Caco-2 (cell line): ENCODE measurements at regions of chr1 and their contacts with region 1.

Region 1: DNA sequence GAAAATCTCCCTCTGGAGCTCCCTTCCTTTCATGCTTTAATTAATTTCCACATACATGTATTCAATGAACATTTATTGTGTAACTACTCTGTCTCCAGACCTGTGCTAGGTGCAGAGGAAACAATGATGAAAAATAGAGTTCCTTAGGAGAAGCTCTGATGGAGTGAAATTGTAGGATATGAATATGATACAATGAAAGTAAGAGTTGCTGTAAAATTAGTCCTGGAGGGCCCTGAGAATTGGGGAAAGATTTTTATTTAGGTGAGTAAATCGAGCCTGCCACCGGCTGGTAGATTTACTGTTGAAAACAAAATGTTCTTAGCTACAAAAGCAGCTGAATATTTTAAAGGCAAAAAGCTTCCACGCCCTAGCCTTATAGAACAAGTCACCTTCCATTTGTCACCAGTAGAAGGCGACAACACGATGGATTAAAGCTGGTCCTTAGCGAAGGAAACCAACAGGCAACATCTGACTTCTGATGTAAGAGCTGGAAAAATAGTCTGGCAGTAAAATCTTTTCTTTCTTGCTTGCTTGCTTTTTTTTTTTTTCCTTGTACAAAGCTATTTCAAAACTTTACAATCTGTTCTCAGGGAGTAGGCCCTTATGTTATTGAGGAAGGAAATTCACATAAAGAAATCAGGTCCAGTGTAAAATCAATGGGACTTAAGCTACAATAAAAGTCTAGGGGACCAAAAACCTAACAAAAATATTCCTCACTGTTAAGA is 82.0 kb upstream of the ROR1 start:
- DNase-seq: peak; percentile 62 to 73
- H3K4me3 ChIP-seq: no peak overlapping the region
- H3K4me3 Mint-ChIP-seq: no peak overlapping the region
- H3K27ac Mint-ChIP-seq: no peak overlapping the region
- H3K4me1 ChIP-seq: peaks cover 5% of the 10 kb centered on the region; the same call in 1 of the 2 replicates
- H3K4me1 Mint-ChIP-seq: peaks cover 18% of the 10 kb centered on the region
- H3K27me3 ChIP-seq: no peaks in the 10 kb centered on the region
- H3K27me3 Mint-ChIP-seq: no peaks in the 10 kb centered on the region
- CTCF ChIP-seq: peak; percentile 54 to 66

Region 2: GRCh38 chr1:63454269-63454668 is 237.6 kb before region 1 on chr1:
- CTCF ChIA-PET with region 1: no interaction called
- POLR2A ChIA-PET with region 1: no interaction called
- intact Hi-C with region 1: no loop called
- DNase-seq: no peak
- H3K4me3 ChIP-seq: no peak overlapping the region
- H3K4me3 Mint-ChIP-seq: no peak overlapping the region
- H3K27ac Mint-ChIP-seq: no peak overlapping the region
- H3K4me1 ChIP-seq: no peaks in the 10 kb centered on the region
- H3K4me1 Mint-ChIP-seq: no peaks in the 10 kb centered on the region
- H3K27me3 ChIP-seq: no peaks in the 10 kb centered on the region
- H3K27me3 Mint-ChIP-seq: no peaks in the 10 kb centered on the region
- CTCF ChIP-seq: peak in 1 of 2 experiments; percentile 6

Region 3: DNA sequence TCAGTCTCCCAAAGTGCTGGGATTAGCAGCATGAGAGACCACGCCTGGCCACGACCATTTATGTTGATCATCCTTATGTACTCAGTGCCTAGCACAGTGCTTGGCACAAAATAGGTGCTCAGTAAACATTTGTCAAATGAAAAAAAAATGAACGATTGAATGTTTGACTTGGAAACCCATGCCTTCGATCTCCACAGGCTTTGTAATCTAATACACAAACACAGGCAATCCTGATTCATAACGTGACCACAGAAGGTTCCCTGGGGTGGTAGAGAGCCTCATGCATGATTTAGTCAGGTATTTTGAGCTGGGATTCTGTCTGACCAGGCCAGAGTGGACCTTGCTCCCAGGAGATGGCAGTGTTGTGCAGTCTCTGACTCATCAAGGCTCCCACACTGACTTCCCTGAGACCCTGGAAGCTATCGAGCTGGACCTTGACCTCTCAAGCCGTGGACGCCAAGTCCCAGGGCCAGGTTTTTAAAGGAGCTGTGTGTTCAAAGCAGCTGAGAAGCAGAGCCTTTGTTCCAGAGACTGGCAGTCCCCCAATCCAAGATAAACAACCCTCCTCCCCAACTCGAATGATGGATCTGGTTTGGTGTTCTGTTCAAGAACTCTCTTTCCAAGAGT is 17.5 kb before region 1 on chr1:
- CTCF ChIA-PET with region 1: interaction called, 28 read pairs
- POLR2A ChIA-PET with region 1: no interaction called
- intact Hi-C with region 1: no loop called
- DNase-seq: peak; percentile 83 to 89
- H3K4me3 ChIP-seq: no peak overlapping the region
- H3K4me3 Mint-ChIP-seq: no peak overlapping the region
- H3K27ac Mint-ChIP-seq: peak overlapping the region; percentile 19
- H3K4me1 ChIP-seq: peaks cover 9% of the 10 kb centered on the region
- H3K4me1 Mint-ChIP-seq: peaks cover 16% of the 10 kb centered on the region
- H3K27me3 ChIP-seq: no peaks in the 10 kb centered on the region
- H3K27me3 Mint-ChIP-seq: no peaks in the 10 kb centered on the region
- CTCF ChIP-seq: peak; percentile 38 to 56

Region 4: GRCh38 chr1:63718541-63718970 is 26.7 kb after region 1 on chr1:
- CTCF ChIA-PET with region 1: interaction called, 11 read pairs
- POLR2A ChIA-PET with region 1: interaction called, 10 read pairs
- intact Hi-C with region 1: loop called (anchors 1 kb)
- DNase-seq: peak; percentile 46 to 49
- H3K4me3 ChIP-seq: no peak overlapping the region
- H3K4me3 Mint-ChIP-seq: peak overlapping the region; percentile 62
- H3K27ac Mint-ChIP-seq: peak overlapping the region; percentile 91
- H3K4me1 ChIP-seq: peaks cover 69% of the 10 kb centered on the region
- H3K4me1 Mint-ChIP-seq: peaks cover 30% of the 10 kb centered on the region
- H3K27me3 ChIP-seq: no peaks in the 10 kb centered on the region
- H3K27me3 Mint-ChIP-seq: no peaks in the 10 kb centered on the region
- CTCF ChIP-seq: no peak

Region 5: DNA sequence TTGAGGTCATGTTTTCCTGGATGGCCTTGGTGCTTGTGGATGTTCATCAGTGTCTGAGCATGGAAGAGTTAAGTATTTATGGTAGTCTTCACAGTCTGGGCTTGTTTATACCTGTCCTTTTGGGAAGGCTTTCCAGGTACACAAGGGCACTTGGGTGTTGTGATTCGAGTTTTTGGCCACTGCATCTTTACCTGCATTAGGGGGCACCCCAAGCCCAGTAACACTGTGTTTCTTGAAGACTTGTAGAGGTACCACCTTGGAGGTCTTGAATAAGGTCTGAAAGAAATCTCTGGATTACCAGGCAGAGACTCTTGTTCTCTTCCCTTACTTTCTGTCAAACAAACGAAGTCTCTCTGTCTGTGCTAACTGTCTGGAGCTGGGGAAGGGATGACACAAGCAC is 47.6 kb after region 1 on chr1:
- CTCF ChIA-PET with region 1: no interaction called
- POLR2A ChIA-PET with region 1: no interaction called
- intact Hi-C with region 1: no loop called
- DNase-seq: no peak
- H3K4me3 ChIP-seq: no peak overlapping the region
- H3K4me3 Mint-ChIP-seq: no peak overlapping the region
- H3K27ac Mint-ChIP-seq: no peak overlapping the region
- H3K4me1 ChIP-seq: no peaks in the 10 kb centered on the region
- H3K4me1 Mint-ChIP-seq: peaks cover 6% of the 10 kb centered on the region
- H3K27me3 ChIP-seq: no peaks in the 10 kb centered on the region
- H3K27me3 Mint-ChIP-seq: no peaks in the 10 kb centered on the region
- CTCF ChIP-seq: no peak

Region 6: DNA sequence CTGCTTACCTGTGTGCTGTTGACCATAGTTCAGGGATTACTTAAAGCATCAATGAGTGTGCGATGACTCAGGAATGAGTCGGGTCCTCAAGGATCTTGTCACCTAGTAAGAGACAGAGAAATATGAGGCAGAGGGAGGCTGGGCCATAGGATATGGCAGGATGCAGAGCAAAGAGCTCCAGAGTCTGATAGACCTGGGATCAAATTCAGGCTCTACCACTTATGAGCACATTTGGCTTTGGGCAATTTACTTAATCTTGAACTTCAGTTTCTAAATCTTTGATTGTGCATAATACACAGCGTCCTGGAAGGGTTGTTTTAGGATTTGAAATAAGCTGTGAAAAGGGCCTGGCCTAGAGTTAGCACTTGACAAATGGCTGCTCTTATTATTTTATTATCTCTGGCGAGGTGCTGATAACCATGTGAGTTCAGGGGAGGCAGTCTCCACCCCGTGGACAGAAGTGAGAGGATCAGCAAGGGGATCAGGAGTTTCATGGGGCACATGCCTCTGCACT is 176.5 kb after region 1 on chr1:
- CTCF ChIA-PET with region 1: no interaction called
- POLR2A ChIA-PET with region 1: no interaction called
- intact Hi-C with region 1: no loop called
- DNase-seq: no peak
- H3K4me3 ChIP-seq: no peak overlapping the region
- H3K4me3 Mint-ChIP-seq: no peak overlapping the region
- H3K27ac Mint-ChIP-seq: no peak overlapping the region
- H3K4me1 ChIP-seq: no peaks in the 10 kb centered on the region
- H3K4me1 Mint-ChIP-seq: peaks cover 12% of the 10 kb centered on the region
- H3K27me3 ChIP-seq: no peaks in the 10 kb centered on the region
- H3K27me3 Mint-ChIP-seq: no peaks in the 10 kb centered on the region
- CTCF ChIP-seq: no peak

Region 7: DNA sequence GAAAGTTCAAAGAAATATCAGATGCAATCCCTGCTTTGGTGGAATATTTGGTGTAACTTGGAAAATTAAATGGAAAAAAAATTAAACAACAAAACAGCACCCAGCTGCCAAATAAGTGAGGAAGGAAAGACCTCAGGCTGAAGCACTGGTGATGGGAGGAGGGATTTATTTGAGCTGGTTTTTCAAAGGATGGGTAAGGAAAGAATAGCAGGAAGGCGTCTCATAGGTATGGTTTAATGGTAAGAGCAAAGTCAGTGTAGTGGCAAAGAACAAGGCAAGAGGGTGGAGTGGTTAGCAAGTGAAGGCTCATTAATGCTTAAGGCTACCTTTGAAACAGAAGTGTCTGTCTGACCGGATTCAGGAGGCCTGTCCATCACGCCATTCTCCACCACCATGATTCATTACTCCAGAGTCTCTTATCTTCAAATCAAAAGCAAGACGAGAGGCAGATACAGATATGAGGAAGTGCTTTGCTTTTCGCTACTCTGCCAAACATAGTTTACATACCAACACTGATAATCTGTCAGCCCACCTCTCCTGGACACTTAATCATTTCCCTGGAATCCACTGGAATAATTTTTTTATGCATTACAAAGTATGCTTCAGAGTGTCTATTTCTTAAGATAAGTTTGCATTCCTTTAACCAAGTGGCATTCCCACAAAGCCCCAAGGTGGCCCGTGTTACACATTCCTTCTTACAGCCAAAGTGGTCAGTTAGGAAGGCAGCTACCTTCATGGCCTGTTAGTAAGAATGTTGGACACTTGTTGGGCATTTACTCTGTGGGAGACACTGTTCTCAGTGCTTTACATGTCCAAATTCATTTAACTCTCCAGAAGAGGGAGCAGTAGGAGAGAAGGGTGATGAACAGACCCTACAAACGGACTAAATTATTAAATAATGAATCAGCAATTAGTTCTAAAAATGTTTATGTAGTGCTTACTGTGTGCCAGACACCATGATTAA is 228.6 kb after region 1 on chr1:
- CTCF ChIA-PET with region 1: interaction called, 8 read pairs
- POLR2A ChIA-PET with region 1: no interaction called
- intact Hi-C with region 1: loop called (anchors 5 kb)
- DNase-seq: peak; percentile 55 to 75
- H3K4me3 ChIP-seq: no peak overlapping the region
- H3K4me3 Mint-ChIP-seq: peak overlapping the region; percentile 45
- H3K27ac Mint-ChIP-seq: peak overlapping the region; percentile 72
- H3K4me1 ChIP-seq: peaks cover 65% of the 10 kb centered on the region
- H3K4me1 Mint-ChIP-seq: peaks cover 53% of the 10 kb centered on the region
- H3K27me3 ChIP-seq: no peaks in the 10 kb centered on the region
- H3K27me3 Mint-ChIP-seq: no peaks in the 10 kb centered on the region
- CTCF ChIP-seq: no peak

Region 8: DNA sequence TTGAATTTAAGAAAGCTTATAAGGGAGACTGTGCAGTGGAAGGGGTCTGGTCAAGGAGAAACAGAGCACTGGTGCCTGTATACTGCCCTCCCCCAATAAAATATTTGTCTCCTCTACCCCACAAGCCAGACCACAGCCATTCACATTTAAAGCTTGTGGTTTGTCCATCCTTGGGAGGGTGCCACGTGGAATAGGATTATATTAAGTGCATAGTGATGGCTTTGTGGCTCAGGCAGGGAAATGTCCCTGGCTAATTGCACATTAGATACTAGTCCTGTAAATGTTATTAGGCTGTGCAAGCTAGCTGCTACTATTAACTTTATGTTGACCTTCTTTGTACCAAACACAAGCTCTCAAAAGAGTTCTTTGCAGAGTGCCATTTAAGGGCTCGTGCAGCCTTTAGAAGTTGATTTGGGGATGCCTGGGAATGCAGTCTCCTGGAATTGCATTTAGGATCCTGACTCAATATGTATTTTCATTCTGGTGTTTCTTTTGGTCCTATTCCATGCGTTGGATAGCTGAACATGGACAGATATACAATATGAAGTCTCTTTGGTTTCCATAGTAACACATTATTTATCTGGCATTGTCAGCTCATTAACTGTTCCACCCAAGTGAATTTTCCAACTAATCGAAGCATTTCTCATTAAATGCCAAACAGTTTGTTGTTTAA is 292.5 kb after region 1 on chr1:
- CTCF ChIA-PET with region 1: no interaction called
- POLR2A ChIA-PET with region 1: no interaction called
- intact Hi-C with region 1: no loop called
- DNase-seq: no peak
- H3K4me3 ChIP-seq: no peak overlapping the region
- H3K4me3 Mint-ChIP-seq: no peak overlapping the region
- H3K27ac Mint-ChIP-seq: no peak overlapping the region
- H3K4me1 ChIP-seq: no peaks in the 10 kb centered on the region
- H3K4me1 Mint-ChIP-seq: peaks cover 7% of the 10 kb centered on the region
- H3K27me3 ChIP-seq: no peaks in the 10 kb centered on the region
- H3K27me3 Mint-ChIP-seq: no peaks in the 10 kb centered on the region
- CTCF ChIP-seq: no peak